CD4-positive, alpha-beta T cell (primary cell): ENCODE measurements at regions of chrX and their contacts with region 1.

Region 1: DNA sequence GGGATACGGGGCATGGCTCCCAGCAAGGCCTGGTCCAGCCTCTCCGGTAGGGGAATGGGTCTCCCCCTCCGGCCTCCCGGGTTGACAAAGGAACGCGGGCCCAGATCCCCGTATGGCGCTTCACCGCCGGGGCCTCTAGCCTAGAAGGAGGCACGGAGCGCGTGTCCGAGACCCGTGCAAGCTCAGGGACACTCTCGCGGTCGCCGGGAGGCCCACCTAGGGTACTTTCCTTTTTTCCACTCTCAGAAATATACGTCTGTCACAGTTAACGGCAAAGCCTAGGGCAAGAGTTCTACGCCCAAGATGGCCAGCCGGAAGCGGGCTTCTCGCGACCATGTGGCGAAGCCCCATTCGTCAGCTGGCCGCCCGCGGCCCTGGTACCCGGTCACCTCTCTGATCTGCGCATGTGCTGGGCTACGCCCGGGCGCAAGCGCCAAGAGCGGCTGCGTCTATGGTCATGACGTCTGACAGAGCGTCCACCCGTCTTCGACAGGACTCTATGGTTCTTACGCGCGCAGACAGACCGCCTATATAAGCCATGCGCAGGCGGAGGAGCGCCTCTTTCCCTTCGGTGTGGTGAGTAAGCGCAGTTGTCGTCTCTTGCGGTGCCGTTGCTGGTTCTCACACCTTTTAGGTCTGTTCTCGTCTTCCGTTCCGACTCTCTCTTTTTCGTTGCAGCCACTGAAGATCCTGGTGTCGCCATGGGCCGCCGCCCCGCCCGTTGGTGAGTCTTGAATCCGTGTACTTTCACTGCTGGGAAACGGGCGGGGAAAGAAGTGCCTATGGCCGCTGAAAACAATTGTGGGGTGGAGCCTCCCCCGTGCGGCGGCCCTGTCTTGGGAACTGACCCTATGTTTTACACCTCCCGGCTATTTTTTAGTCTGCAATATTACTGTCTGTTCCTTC is at the start of gene RPL10:
- DNase-seq: peak; percentile 76 to 96 (median 86)
- ATAC-seq: peak; percentile 83
- H3K4me3 ChIP-seq: peak within 1 kb of the TSS; percentile 72
- H3K4me3 Mint-ChIP-seq: peak within 1 kb of the TSS; percentile 98
- H3K27ac ChIP-seq: peak within 1 kb of the TSS; percentile 88 to 99
- H3K27ac Mint-ChIP-seq: peak within 1 kb of the TSS; percentile 99
- H3K4me1 ChIP-seq: peaks cover 27% of the 10 kb centered on the region
- H3K4me1 Mint-ChIP-seq: peaks cover 22% of the 10 kb centered on the region
- H3K27me3 ChIP-seq: no peaks in the 10 kb centered on the region
- H3K27me3 Mint-ChIP-seq: no peaks in the 10 kb centered on the region
- CTCF ChIP-seq: no peak
- total RNA-seq, gene RPL10: 5,036 to 5,204 TPM

Region 2: GRCh38 chrX:153971450-153972367 is 426.4 kb before region 1 on chrX and contains the start of gene HCFC1:
- CTCF ChIA-PET with region 1: no interaction called
- POLR2A ChIA-PET with region 1: interaction called, 12 read pairs
- intact Hi-C with region 1: no loop called
- DNase-seq: peak; percentile 81 to 95 (median 90)
- ATAC-seq: peak; percentile 48
- H3K4me3 ChIP-seq: peak within 1 kb of the TSS; percentile 96
- H3K4me3 Mint-ChIP-seq: peak within 1 kb of the TSS; percentile 100
- H3K27ac ChIP-seq: peak within 1 kb of the TSS; percentile 98 to 99
- H3K27ac Mint-ChIP-seq: peak within 1 kb of the TSS; percentile 98
- H3K4me1 ChIP-seq: peaks cover 56% of the 10 kb centered on the region
- H3K4me1 Mint-ChIP-seq: peaks cover 48% of the 10 kb centered on the region
- H3K27me3 ChIP-seq: no peaks in the 10 kb centered on the region
- H3K27me3 Mint-ChIP-seq: no peaks in the 10 kb centered on the region
- CTCF ChIP-seq: no peak
- total RNA-seq, gene HCFC1: 45.9 to 50.2 TPM

Region 3: DNA sequence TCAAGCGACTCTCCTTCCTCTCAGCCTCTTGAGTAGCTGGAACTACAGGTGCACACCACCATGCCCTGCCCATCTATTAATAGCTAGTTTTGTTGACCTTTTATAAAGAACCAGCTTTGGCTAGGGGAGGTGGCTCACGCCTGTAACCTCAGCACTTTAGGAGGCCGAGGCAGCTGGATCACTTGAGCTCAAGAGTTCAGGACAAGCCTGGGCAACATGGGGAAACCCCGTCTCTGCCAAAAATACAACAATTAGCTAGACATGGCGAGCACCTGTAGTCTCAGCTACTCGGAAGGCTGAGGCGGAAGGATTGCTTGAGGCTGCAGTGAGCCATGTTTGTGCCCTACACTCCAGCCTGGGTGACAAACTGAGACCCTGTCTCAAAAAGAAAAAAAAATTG is 99.8 kb before region 1 on chrX:
- CTCF ChIA-PET with region 1: no interaction called
- POLR2A ChIA-PET with region 1: no interaction called
- intact Hi-C with region 1: no loop called
- DNase-seq: no peak
- ATAC-seq: no peak
- H3K4me3 ChIP-seq: no peak overlapping the region
- H3K4me3 Mint-ChIP-seq: no peak overlapping the region
- H3K27ac ChIP-seq: no peak overlapping the region
- H3K27ac Mint-ChIP-seq: no peak overlapping the region
- H3K4me1 ChIP-seq: peaks cover 3% of the 10 kb centered on the region
- H3K4me1 Mint-ChIP-seq: no peaks in the 10 kb centered on the region
- H3K27me3 ChIP-seq: no peaks in the 10 kb centered on the region
- H3K27me3 Mint-ChIP-seq: no peaks in the 10 kb centered on the region
- CTCF ChIP-seq: no peak

Region 4: DNA sequence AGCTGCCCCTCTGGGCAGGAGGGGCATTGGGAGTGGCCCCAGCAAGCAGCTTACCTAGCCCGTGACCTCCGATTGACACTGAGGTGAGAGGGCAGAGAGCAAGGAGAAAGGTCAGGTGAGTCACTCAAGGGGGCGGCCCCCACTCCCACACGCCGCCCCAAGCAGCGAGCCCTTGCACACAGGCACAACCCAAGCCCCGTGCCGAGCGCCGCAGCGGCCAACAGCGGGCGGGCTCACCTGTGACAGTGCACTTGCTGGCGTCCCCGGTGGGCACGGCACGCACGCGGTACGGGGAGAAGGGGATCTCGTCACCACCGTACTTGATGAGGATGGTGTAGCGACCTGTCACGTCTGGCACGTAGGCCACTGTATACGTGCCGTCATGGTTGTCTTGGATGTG is 40.9 kb before region 1 on chrX:
- CTCF ChIA-PET with region 1: no interaction called
- POLR2A ChIA-PET with region 1: no interaction called
- intact Hi-C with region 1: no loop called
- DNase-seq: no peak
- ATAC-seq: no peak
- H3K4me3 ChIP-seq: no peak overlapping the region
- H3K4me3 Mint-ChIP-seq: no peak overlapping the region
- H3K27ac ChIP-seq: no peak overlapping the region
- H3K27ac Mint-ChIP-seq: no peak overlapping the region
- H3K4me1 ChIP-seq: peaks cover 98% of the 10 kb centered on the region
- H3K4me1 Mint-ChIP-seq: no peaks in the 10 kb centered on the region
- H3K27me3 ChIP-seq: no peaks in the 10 kb centered on the region
- H3K27me3 Mint-ChIP-seq: no peaks in the 10 kb centered on the region
- CTCF ChIP-seq: no peak

Region 5: GRCh38 chrX:154378782-154379591 is 19.1 kb before region 1 on chrX and contains the start of gene EMD:
- CTCF ChIA-PET with region 1: no interaction called
- POLR2A ChIA-PET with region 1: interaction called, 14 read pairs
- intact Hi-C with region 1: no loop called
- DNase-seq: peak; percentile 90 to 98 (median 96)
- ATAC-seq: peak; percentile 78
- H3K4me3 ChIP-seq: peak within 1 kb of the TSS; percentile 77
- H3K4me3 Mint-ChIP-seq: peak within 1 kb of the TSS; percentile 93
- H3K27ac ChIP-seq: peak within 1 kb of the TSS; percentile 92 to 96
- H3K27ac Mint-ChIP-seq: peak within 1 kb of the TSS; percentile 94
- H3K4me1 ChIP-seq: peaks cover 47% of the 10 kb centered on the region
- H3K4me1 Mint-ChIP-seq: peaks cover 5% of the 10 kb centered on the region
- H3K27me3 ChIP-seq: no peaks in the 10 kb centered on the region
- H3K27me3 Mint-ChIP-seq: no peaks in the 10 kb centered on the region
- CTCF ChIP-seq: no peak
- total RNA-seq, gene EMD: 164 to 178 TPM

Region 6: DNA sequence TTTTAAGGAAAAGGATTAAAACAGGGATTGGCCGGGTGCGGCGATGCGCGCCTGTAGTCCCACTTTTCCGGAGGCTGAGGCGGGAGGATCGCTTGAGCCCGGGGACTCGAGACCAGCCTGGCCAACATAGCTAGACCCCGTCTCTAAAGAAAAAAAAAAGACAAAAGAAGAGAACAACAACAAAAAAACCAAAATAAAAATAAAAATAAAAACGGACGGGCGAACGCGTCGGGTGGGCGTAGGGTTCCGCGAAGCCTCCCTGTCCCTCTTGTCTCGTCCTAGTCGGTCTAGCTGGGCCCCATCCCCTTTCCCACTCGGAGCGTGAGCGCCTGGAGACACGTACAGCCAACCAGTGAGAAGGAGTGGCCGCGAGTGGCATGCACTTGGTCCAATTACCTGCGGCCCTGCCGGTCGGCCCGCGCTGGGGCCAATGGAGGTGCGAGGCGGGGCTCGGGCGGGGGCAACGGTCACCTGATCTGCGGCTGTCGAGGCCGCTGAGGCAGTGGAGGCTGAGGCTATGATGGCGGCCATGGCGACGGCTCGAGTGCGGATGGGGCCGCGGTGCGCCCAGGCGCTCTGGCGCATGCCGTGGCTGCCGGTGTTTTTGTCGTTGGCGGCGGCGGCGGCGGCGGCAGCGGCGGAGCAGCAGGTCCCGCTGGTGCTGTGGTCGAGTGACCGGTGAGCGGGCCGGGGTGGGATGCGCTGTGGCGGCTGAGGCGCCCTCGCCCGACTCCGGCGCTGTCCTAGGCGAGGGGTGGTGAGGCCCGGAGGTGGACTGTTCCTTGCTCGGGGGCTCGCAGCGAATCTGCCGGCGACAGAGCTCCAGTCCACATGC is 30.3 kb after region 1 on chrX and contains the start of gene ATP6AP1:
- CTCF ChIA-PET with region 1: interaction called, 4 read pairs
- POLR2A ChIA-PET with region 1: interaction called, 12 read pairs
- intact Hi-C with region 1: loop called in 1 of 2 experiments (anchors 2 kb)
- DNase-seq: peak; percentile 77 to 94 (median 84)
- ATAC-seq: peak; percentile 96
- H3K4me3 ChIP-seq: peak within 1 kb of the TSS; percentile 68
- H3K4me3 Mint-ChIP-seq: peak within 1 kb of the TSS; percentile 90
- H3K27ac ChIP-seq: peak within 1 kb of the TSS; percentile 58 to 70
- H3K27ac Mint-ChIP-seq: peak within 1 kb of the TSS; percentile 80
- H3K4me1 ChIP-seq: peaks cover 29% of the 10 kb centered on the region
- H3K4me1 Mint-ChIP-seq: peaks cover 30% of the 10 kb centered on the region
- H3K27me3 ChIP-seq: no peaks in the 10 kb centered on the region
- H3K27me3 Mint-ChIP-seq: no peaks in the 10 kb centered on the region
- CTCF ChIP-seq: no peak
- total RNA-seq, gene ATP6AP1: 31.4 to 40.8 TPM

Region 7: DNA sequence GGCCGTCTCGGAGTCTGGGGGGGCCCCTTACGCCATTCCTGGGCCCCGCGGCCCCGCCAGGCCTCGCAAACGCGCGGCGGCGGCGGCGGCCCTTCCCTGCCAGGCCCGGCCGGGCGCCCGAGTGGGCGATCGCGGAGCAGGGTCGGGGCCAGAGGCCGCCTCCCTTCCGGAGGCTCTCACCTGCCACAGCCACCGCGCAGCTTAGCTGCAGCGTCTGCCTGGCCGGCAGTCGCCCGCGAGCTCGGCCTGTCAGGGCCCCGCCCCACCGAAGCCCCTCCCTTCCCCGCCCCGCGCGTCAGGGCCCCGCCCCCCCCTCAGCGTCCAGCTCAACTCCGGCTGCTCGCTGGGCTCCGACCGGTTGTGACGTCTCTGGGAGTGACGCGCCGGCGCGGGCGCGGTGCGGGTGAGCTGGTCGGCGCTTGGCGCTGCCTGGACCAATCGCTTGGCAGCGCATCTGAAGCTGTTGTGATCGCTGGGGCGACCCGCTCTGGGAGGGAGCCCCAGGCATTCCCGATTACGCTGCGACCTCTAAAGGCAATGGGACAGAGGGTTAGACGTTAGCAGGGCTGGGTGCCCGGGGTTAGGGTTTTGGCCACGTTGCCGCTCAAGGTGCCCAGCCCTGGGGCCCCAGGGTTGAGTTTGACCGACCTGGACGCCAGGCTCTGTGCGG is 92.5 kb after region 1 on chrX and contains the start of gene SLC10A3:
- CTCF ChIA-PET with region 1: interaction called, 9 read pairs
- POLR2A ChIA-PET with region 1: interaction called, 18 read pairs
- intact Hi-C with region 1: no loop called
- DNase-seq: peak; percentile 68 to 95 (median 84)
- ATAC-seq: peak; percentile 78
- H3K4me3 ChIP-seq: peak within 1 kb of the TSS; percentile 72
- H3K4me3 Mint-ChIP-seq: peak within 1 kb of the TSS; percentile 91
- H3K27ac ChIP-seq: peak within 1 kb of the TSS; percentile 53 to 88
- H3K27ac Mint-ChIP-seq: peak within 1 kb of the TSS; percentile 95
- H3K4me1 ChIP-seq: peaks cover 38% of the 10 kb centered on the region
- H3K4me1 Mint-ChIP-seq: peaks cover 11% of the 10 kb centered on the region
- H3K27me3 ChIP-seq: no peaks in the 10 kb centered on the region
- H3K27me3 Mint-ChIP-seq: no peaks in the 10 kb centered on the region
- CTCF ChIP-seq: no peak
- total RNA-seq, gene SLC10A3: 15.7 to 16.4 TPM

Region 8: DNA sequence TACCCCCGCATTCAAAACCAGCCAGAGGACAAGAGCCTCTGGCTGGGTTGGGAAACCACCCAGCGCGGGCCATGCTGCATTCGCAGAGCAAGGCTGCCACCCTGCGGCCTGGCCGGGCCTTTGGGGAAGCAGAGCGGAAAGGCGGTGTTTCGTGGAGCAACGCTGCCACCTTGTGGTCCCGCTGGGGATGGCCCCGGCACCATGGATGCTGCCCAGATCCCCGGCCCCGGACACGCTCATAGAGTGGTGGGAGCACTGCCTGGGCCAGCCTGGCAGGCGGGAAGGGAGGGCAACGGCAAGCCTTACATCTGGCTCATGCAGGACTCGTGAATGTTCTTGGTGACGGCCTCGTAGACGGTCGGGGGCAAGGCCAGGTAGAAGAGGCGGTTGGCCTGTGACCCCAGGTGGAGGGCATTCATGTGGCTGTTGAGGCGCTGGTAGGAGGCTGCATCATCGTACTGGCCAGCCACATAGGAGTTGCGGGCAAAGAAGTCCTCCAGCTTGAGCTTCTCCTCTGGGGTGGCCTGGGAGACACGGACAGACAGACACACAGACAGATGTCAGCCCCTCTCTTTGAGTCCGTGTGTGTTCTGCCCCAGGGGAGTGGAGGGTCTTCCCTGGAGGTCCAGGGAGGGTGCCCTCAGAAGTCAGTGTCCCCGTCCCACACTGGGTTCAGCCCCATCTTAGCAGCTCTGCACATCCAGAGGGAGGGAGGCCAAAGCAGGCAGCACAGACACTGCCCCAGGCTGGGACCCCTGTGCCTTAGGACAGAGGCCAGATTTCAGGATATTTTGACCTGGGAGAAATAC is 137.0 kb after region 1 on chrX:
- CTCF ChIA-PET with region 1: no interaction called
- POLR2A ChIA-PET with region 1: interaction called, 8 read pairs
- intact Hi-C with region 1: loop called (anchors 5 kb)
- DNase-seq: peak; percentile 79 to 94 (median 88)
- ATAC-seq: peak; percentile 97
- H3K4me3 ChIP-seq: no peak overlapping the region
- H3K4me3 Mint-ChIP-seq: no peak overlapping the region
- H3K27ac ChIP-seq: no peak overlapping the region
- H3K27ac Mint-ChIP-seq: peak overlapping the region; percentile 51
- H3K4me1 ChIP-seq: peaks cover 9% of the 10 kb centered on the region
- H3K4me1 Mint-ChIP-seq: peaks cover 11% of the 10 kb centered on the region
- H3K27me3 ChIP-seq: no peaks in the 10 kb centered on the region
- H3K27me3 Mint-ChIP-seq: no peaks in the 10 kb centered on the region
- CTCF ChIP-seq: peak; percentile 97